ENCODE measurements at regions of chr16 and their contacts with region 1.

Region 1: DNA sequence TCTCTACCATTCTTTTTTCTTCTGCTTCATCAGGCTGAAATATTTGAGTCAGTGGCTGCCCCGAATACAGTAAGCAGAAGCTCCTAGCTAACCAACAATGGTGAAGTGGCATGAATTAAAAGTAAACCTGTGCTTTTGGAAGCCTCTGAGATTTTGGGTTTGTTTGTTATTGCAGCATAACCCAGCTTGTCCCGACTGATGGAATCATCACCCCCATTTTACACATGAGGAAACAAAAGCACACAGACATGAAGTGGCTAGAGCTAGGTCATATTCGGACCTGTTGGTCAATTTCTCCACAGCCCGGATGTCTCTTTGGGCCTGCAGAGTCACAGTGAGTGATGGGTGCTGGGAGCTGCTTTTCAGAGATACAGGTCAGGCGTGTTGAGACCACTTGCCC is 39.4 kb downstream of the IRX5 start:
- DNase-seq: no peak
- H3K4me3 ChIP-seq: no peak overlapping the region
- H3K27ac ChIP-seq: no peak overlapping the region
- H3K4me1 ChIP-seq: no peaks in the 10 kb centered on the region
- CTCF ChIP-seq: no peak

Region 2: GRCh38 chr16:54891346-54891745 is 78.7 kb before region 1 on chr16:
- CTCF ChIA-PET with region 1: interaction called, 15 read pairs
- POLR2A ChIA-PET with region 1: no interaction called
- intact Hi-C with region 1: no loop called
- DNase-seq: no peak
- H3K4me3 ChIP-seq: no peak overlapping the region
- H3K27ac ChIP-seq: no peak overlapping the region
- H3K4me1 ChIP-seq: peaks cover 10% of the 10 kb centered on the region
- CTCF ChIP-seq: no peak